ENCODE measurements at regions of chr1 and their contacts with region 1.

Region 1: DNA sequence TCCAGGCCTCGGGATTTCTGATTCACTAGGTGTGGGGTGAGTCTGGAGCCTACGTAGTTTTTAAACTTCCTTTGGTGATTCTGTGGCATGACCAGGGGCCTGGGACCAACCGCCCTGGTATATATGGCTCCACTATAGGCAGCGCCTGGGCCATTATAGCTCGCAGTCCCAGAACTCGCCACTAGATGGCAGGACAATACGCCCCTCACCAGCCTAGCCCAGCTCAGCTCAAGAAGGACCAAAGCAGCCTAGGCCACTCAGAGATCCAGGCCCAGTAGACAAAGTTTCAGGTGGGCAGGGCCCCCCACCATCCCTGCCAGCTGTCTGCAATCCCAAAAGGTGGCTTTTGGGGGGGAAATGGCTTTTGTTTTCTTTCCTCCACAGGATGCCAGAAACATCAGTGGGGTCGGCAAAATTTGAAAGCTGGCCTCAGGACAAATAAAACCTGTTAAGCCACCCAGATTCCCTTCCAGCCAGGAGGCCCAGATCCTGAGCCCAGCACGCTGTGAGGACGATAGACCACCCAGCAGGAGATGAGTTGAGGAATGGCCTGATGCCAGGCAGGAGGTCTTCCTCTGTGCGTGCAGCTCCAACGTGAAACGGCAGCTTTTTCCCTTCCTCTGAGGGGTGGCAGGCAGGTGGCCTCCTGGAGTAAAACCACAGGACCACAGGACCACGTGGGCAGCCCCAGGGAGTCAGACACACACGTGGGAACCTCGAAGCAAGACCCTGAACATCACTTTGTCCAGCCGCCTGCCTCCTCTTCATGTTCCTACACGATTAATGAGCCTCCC is 24.8 kb upstream of the TMEM51 start:
- DNase-seq: peak; percentile 27 to 69 (median 54)
- H3K4me3 ChIP-seq: no peak overlapping the region
- H3K4me3 Mint-ChIP-seq: no peak overlapping the region
- H3K27ac ChIP-seq: no peak overlapping the region
- H3K27ac Mint-ChIP-seq: no peak overlapping the region
- H3K4me1 ChIP-seq: no peaks in the 10 kb centered on the region
- H3K4me1 Mint-ChIP-seq: no peaks in the 10 kb centered on the region
- H3K27me3 ChIP-seq: peaks cover 2% of the 10 kb centered on the region
- H3K27me3 Mint-ChIP-seq: peaks cover 5 to 32% of the 10 kb centered on the region in 2 donors

Region 2: GRCh38 chr1:15114884-15115283 is 13.8 kb before region 1 on chr1:
- CTCF ChIA-PET with region 1: interaction called, 10 read pairs
- POLR2A ChIA-PET with region 1: no interaction called
- DNase-seq: no peak
- H3K4me3 ChIP-seq: no peak overlapping the region
- H3K4me3 Mint-ChIP-seq: no peak overlapping the region
- H3K27ac ChIP-seq: no peak overlapping the region
- H3K27ac Mint-ChIP-seq: peak overlapping the region in 1 of 8 donors; percentile 60
- H3K4me1 ChIP-seq: no peaks in the 10 kb centered on the region
- H3K4me1 Mint-ChIP-seq: peaks cover 0 to 5% (median 0%) of the 10 kb centered on the region in 3 donors
- H3K27me3 ChIP-seq: no peaks in the 10 kb centered on the region
- H3K27me3 Mint-ChIP-seq: peaks cover 0 to 21% of the 10 kb centered on the region in 2 donors

Region 3: DNA sequence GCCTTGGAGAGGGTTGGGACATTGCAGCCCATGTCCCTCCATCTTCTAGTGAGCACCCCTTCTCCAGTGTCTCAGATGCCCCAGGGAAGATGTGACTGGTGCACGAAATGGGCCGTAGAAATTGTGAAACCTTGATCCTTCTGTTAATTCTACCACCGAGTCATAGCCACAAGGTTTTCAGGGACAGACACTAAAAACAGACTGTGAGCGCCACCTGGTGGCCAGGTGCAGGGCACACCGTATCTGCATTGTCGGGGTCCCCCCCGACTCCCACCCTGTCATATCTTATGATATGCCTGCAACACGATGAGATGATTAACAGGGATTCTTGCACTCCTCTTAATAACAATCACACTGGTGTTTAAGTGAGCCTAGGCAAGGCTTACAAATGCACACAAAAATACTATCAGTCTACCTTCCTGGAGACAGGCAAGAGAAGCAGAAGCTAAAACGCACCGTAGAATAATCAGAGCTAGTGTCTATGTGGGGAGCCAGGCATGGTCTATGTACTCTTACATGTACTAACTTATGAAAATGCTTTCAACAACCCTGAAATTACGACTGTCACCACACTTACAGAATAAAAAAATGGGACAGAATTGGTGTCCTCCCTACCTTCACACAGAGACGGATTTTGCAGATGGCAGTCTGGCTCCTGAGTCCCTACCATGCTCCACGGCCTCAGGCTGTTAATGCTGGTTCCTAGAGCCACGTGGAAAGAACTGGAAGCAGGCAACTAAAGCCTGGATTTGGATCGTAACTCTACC is 176.2 kb after region 1 on chr1:
- CTCF ChIA-PET with region 1: interaction called, 24 read pairs
- POLR2A ChIA-PET with region 1: no interaction called
- DNase-seq: peak; percentile 34 to 68 (median 55)
- H3K4me3 ChIP-seq: no peak overlapping the region
- H3K4me3 Mint-ChIP-seq: no peak overlapping the region
- H3K27ac ChIP-seq: no peak overlapping the region
- H3K27ac Mint-ChIP-seq: no peak overlapping the region
- H3K4me1 ChIP-seq: no peaks in the 10 kb centered on the region
- H3K4me1 Mint-ChIP-seq: peaks cover 0 to 4% (median 0%) of the 10 kb centered on the region in 3 donors
- H3K27me3 ChIP-seq: no peaks in the 10 kb centered on the region
- H3K27me3 Mint-ChIP-seq: peaks cover 2 to 15% of the 10 kb centered on the region in 2 donors